ENCODE measurements at regions of chr10 and their contacts with region 1.

Region 1: DNA sequence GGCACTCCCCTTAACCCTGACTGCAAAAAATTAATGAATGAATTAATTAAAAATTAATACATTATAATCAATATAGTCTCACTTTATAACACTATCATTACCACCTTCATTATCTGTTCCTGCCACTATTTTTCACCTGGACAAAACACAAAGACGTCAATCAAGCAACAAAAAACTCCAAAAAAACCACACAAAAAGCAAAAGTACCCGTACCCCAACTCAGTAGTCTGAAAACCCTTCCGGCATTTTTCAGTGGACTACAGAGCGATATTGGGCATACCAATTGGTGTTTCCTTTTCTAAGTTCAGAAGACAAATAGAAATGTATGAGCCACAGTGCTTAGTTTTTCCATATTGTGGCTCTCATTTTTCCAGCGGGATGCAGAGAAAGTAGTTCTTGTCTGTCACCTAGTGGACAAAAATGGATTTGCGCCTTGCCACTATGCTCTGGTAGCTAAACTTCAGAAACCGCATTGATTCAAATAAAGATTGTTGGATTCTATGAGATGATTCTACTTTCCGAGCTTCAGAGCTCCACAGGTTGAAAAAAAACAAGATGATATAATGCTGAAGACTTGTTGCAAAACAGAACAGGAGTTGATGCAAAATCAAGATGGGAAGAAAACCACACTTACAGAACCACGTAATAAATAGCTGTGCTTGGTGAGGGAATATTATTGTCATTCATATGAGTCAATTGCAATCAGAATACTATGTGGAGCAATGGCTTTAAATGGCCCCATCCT is 50.6 kb upstream of the ITGB1 start:
- DNase-seq: peak; percentile 85
- H3K4me3 ChIP-seq: no peak overlapping the region
- H3K27ac ChIP-seq: no peak overlapping the region
- H3K4me1 ChIP-seq: peaks cover 8% of the 10 kb centered on the region
- H3K27me3 ChIP-seq: no peaks in the 10 kb centered on the region
- CTCF ChIP-seq: peak; percentile 95

Region 2: DNA sequence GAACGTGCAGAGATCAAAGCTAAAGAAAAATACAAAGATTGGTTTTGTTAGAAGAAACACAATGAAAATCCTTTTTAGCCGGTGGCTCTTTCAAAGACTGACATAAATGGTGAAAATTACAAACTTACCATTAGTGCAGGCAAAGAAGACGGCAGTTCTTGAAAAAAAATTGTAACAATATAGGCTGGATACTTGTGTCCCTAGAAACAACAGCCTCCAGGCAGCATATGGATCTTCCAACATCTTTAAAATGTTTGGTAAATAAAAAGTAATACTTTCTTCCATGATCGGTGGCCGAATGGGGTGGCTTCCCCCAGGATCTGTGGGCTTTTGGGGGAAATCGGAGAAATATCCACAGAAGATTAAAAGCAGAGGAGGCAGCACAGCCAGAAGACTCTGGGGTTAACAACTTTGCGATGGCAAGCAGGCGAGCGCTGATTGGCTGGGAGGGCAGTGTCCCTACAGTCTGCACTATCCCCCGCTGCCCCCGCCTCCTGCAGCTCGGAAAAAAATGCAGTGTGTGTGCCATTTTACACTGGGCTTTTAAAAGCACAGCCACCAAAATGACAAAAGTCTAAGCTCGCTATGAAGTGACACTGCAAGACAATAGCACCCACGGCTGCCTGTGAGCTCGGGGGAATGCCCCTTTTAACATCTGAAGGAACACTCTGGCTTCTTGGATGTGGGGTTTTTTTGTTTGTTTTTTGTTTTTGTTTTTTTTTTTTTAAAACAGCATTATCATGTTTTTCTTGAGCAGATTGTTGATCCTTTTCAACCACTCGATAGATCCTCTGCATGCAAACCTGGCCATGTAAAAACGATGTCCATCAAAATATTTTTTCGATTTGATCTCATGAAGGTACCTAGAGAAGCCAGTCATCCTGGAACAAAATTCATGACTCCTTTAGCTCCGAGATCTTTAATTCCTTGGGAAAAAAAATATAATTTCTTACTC is 630.0 kb before region 1 on chr10:
- CTCF ChIA-PET with region 1: no interaction called
- POLR2A ChIA-PET with region 1: no interaction called
- intact Hi-C with region 1: loop called (anchors 10 kb)
- DNase-seq: peak; percentile 98
- H3K4me3 ChIP-seq: peak overlapping the region; percentile 76
- H3K27ac ChIP-seq: peak overlapping the region; percentile 98
- H3K4me1 ChIP-seq: peaks cover 25% of the 10 kb centered on the region
- H3K27me3 ChIP-seq: no peaks in the 10 kb centered on the region
- CTCF ChIP-seq: no peak

Region 3: GRCh38 chr10:32445740-32446535 is 562.7 kb before region 1 on chr10 and contains the start of gene CCDC7:
- CTCF ChIA-PET with region 1: interaction called, 3 read pairs
- POLR2A ChIA-PET with region 1: no interaction called
- intact Hi-C with region 1: loop called (anchors 5 kb)
- DNase-seq: peak; percentile 97
- H3K4me3 ChIP-seq: peak within 1 kb of the TSS; percentile 64
- H3K27ac ChIP-seq: peak within 1 kb of the TSS; percentile 96
- H3K4me1 ChIP-seq: peaks cover 6% of the 10 kb centered on the region
- H3K27me3 ChIP-seq: no peaks in the 10 kb centered on the region
- CTCF ChIP-seq: peak; percentile 55
- total RNA-seq, gene CCDC7: 12.5 and 16.4 TPM in 2 replicates

Region 4: GRCh38 chr10:32650246-32650655 is 358.4 kb before region 1 on chr10:
- CTCF ChIA-PET with region 1: no interaction called
- POLR2A ChIA-PET with region 1: no interaction called
- intact Hi-C with region 1: no loop called
- DNase-seq: no peak
- H3K4me3 ChIP-seq: no peak overlapping the region
- H3K27ac ChIP-seq: no peak overlapping the region
- H3K4me1 ChIP-seq: no peaks in the 10 kb centered on the region
- H3K27me3 ChIP-seq: no peaks in the 10 kb centered on the region
- CTCF ChIP-seq: no peak

Region 5: DNA sequence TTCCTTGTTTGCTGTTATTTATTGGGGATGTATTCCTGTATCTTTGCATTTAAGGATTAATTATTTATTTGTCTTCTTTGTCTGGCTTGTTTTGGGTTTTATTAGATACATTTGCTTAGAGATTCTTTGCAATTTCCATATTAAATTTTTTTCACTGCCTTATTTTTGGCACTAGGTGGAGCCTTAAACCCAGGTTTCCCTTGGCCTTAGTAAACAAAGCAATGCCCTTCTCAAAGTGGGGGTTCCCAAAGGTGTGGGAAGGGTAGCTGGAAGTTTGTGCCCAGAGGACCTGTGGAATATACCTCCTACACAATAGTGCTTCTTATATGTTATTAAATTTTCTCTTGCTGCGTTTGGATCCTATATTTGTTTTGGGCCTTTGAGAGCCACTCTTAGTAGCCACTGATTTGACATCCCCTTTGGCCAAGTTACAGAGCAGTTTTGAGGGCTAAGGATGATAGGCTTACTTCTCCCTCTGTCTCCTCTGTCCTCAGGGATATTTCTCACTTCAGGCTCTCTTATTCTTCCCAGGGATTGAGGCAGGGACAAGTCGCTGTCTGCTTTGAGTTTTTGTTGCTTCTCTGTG is 213.0 kb before region 1 on chr10:
- CTCF ChIA-PET with region 1: no interaction called
- POLR2A ChIA-PET with region 1: no interaction called
- intact Hi-C with region 1: loop called (anchors 1 kb)
- DNase-seq: peak; percentile 53
- H3K4me3 ChIP-seq: no peak overlapping the region
- H3K27ac ChIP-seq: no peak overlapping the region
- H3K4me1 ChIP-seq: no peaks in the 10 kb centered on the region
- H3K27me3 ChIP-seq: no peaks in the 10 kb centered on the region
- CTCF ChIP-seq: peak; percentile 75

Region 6: DNA sequence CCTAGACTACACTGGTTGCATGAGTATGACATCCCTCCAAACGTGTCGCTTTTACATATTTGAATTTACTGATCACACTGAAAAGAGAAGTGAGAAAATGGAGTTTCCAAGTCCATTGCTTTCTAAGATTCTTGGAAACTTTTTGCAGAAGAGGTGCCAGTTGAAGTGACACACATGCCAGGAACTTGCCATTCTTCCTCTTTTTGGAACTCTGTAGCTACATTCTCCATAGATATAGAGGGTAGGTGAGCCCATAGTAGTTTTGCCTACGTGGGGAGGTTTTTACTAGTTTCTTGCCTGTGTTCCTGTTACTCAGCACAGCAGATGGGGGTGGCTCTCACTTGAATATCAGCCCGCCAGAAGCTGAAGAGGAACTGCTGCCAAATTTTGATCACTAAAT is 612.4 kb after region 1 on chr10:
- CTCF ChIA-PET with region 1: no interaction called
- POLR2A ChIA-PET with region 1: no interaction called
- intact Hi-C with region 1: no loop called
- DNase-seq: no peak
- H3K4me3 ChIP-seq: no peak overlapping the region
- H3K27ac ChIP-seq: no peak overlapping the region
- H3K4me1 ChIP-seq: no peaks in the 10 kb centered on the region
- H3K27me3 ChIP-seq: no peaks in the 10 kb centered on the region
- CTCF ChIP-seq: no peak